Calu3 (cell line): ENCODE measurements at regions of chr19 and their contacts with region 1.

Region 1: DNA sequence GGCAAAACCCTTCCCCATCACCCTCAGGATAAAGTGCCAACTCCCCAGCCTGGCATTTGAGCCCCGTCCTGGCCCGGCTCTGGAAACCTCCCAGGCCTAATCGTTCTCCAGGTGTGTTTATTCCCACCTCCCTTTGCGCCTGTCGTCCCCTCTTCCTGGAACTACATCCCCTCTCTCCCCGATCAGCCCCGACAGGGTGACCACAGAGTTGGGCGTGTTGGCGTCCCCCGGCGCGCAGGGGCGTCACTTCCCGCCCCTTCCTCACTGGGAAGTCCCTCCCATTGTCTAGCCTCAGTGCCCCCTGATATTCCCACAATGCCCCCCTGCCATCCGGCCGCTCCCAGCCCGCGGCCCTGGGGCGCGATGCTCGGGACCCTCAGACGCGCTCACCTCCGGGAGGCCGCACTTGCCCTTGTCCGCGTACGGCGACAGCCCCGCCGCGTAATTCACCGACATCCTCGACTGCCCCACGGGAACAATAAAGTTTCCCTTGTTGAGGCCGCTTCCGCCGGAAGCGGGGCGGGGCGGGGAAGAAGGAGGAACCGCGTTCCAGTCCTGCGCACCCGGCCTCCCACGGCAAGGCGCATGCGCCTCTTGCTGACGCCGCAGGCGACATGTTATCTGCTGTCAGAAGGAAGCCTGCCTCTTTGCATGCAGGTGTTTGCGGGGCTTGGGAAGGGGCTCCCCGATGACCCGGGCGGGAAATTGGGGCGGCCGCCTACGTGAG is at the starts of genes ANKRD24 and SIRT6:
- DNase-seq: peak; percentile 94
- H3K4me3 Mint-ChIP-seq: peak within 1 kb of the TSS; percentile 99
- H3K27ac Mint-ChIP-seq: peak within 1 kb of the TSS; percentile 88
- H3K4me1 Mint-ChIP-seq: peaks cover 8% of the 10 kb centered on the region
- H3K27me3 Mint-ChIP-seq: peaks cover 28% of the 10 kb centered on the region
- CTCF ChIP-seq: no peak
- total RNA-seq, gene ANKRD24: 0.76 and 1.4 TPM in 2 replicates
- total RNA-seq, gene SIRT6: 22.9 and 26.6 TPM in 2 replicates

Region 2: GRCh38 chr19:4058034-4058692 is 124.1 kb before region 1 on chr19:
- CTCF ChIA-PET with region 1: no interaction called
- intact Hi-C with region 1: loop called (anchors 10 kb)
- DNase-seq: peak; percentile 88
- H3K4me3 Mint-ChIP-seq: peak overlapping the region; percentile 82
- H3K27ac Mint-ChIP-seq: peak overlapping the region; percentile 56
- H3K4me1 Mint-ChIP-seq: peaks cover 15% of the 10 kb centered on the region
- H3K27me3 Mint-ChIP-seq: no peaks in the 10 kb centered on the region
- CTCF ChIP-seq: no peak

Region 3: DNA sequence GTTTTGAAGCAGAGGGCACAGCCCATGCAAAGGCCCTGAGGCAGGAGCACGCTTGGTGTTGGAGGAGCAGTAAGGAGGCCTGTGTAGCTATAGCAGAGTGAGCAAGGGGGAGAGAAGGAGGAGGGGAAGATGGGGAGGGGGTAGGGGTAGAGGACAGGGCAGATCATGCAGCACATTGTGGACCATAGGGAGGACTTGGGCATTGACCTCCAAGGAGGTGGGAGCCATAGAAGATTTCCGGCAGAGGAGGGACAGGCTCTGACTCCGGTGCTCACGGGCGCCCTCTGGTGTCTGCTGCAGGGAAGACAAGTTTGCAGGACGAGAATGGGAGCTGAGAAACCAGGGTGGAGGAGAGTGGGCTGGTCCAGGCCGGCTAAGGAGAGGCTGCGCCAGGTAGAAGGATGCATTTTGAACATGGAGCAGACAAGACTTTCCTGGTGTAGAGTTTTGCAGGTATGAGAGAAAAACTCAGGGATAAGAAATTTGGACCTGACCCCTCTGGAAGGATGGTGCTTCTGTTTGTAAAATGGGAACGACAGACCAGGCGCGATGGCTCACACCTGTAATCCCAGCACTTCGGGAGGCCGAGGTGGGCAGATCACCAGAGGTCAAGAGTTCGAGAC is 42.5 kb before region 1 on chr19:
- CTCF ChIA-PET with region 1: interaction called, 3 read pairs
- intact Hi-C with region 1: loop called (anchors 5 kb)
- DNase-seq: peak; percentile 83
- H3K4me3 Mint-ChIP-seq: no peak overlapping the region
- H3K27ac Mint-ChIP-seq: no peak overlapping the region
- H3K4me1 Mint-ChIP-seq: no peaks in the 10 kb centered on the region
- H3K27me3 Mint-ChIP-seq: no peaks in the 10 kb centered on the region
- CTCF ChIP-seq: peak; percentile 64

Region 4: GRCh38 chr19:4164262-4164661 is 18.0 kb before region 1 on chr19:
- CTCF ChIA-PET with region 1: no interaction called
- intact Hi-C with region 1: no loop called
- DNase-seq: no peak
- H3K4me3 Mint-ChIP-seq: no peak overlapping the region
- H3K27ac Mint-ChIP-seq: no peak overlapping the region
- H3K4me1 Mint-ChIP-seq: no peaks in the 10 kb centered on the region
- H3K27me3 Mint-ChIP-seq: peaks cover 28% of the 10 kb centered on the region
- CTCF ChIP-seq: no peak